Activated CD4-positive, alpha-beta T cell treated with anti-CD3 and anti-CD28 coated beads for 36 hours (primary cell): ENCODE measurements at regions of chr1 and their contacts with region 1.

Region 1: DNA sequence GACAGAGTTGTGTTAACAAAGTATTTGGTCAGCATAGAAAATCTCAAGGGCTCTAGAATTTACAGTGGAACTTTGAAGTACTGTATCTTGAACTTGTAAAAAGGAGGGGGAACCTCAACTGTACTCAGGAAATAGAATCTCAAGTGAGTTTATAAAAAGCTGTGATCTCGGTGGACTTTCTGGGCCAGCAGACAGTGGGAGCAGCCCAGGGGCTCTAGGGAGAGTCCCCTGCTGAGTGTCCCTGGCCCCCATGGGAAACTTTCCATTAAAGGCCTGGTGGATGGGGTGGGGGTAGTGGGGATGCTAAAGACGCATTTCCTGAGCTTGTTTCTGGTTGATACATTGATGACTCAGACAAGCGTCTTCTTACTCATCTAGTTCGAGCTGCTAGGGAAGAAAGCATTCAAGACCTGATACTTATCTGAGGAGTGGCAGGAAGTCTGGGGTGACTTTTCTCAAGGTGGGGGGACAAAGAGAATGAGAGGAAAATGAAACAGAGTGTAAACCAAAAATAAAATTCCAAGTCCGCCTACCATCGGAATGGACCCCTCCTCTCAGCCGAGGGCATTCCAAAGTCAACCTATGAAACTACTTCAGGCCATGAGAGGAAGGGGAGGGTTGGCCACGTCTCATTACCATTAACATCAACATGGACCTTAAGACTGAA is 65.5 kb downstream of the NID1 start:
- DNase-seq: peak; percentile 76
- ATAC-seq: peak; percentile 85
- H3K4me3 Mint-ChIP-seq: peak overlapping the region; percentile 32
- H3K27ac Mint-ChIP-seq: peak overlapping the region; percentile 94
- H3K4me1 Mint-ChIP-seq: peaks cover 58% of the 10 kb centered on the region
- H3K27me3 Mint-ChIP-seq: no peaks in the 10 kb centered on the region

Region 2: DNA sequence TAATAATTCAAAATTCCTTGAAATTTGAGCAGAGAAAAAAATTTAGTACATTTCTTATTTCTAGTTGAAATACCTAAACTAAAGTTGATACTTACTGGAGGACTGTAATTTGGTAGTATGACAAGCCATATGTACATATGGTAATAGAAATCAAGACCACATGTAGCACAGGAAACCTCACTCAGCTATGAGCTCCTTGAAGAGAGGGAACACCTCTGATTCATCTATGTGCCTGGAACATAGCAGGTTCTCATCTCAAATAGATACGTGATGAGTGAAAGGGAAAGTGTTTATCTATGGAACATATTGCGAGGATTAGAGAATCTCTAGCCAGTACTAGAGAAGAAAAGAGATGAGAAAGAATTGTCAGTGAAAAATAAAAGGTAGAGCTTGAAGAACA is 301.9 kb before region 1 on chr1:
- CTCF ChIA-PET with region 1: no interaction called
- POLR2A ChIA-PET with region 1: no interaction called
- intact Hi-C with region 1: loop called in 1 of 2 experiments (anchors 2 kb)
- DNase-seq: no peak
- ATAC-seq: peak; percentile 100
- H3K4me3 Mint-ChIP-seq: no peak overlapping the region
- H3K27ac Mint-ChIP-seq: peak overlapping the region; percentile 85
- H3K4me1 Mint-ChIP-seq: peaks cover 17% of the 10 kb centered on the region
- H3K27me3 Mint-ChIP-seq: no peaks in the 10 kb centered on the region

Region 3: DNA sequence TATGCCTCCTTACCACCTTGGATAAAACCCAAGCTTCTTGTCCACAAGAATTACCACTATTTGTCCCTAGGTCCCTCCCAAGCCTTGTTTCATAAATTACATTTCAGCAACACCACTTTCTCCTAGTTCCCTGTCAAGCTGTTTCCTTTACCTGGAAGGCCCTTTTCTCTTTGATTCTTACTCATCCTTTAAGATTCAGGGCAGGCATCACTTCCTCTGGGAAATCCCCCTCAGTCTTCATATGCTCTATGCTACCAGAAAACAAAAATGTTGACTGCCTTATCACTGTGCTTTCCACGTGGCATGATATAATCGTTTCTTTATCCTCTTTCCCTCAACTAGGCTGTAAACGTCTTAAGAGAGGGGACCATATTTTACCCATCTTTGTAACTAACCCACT is 235.4 kb before region 1 on chr1:
- CTCF ChIA-PET with region 1: no interaction called
- POLR2A ChIA-PET with region 1: no interaction called
- intact Hi-C with region 1: loop called in 1 of 2 experiments (anchors 1 kb)
- DNase-seq: peak; percentile 38
- ATAC-seq: peak; percentile 94
- H3K4me3 Mint-ChIP-seq: no peak overlapping the region
- H3K27ac Mint-ChIP-seq: no peak overlapping the region
- H3K4me1 Mint-ChIP-seq: peaks cover 11% of the 10 kb centered on the region
- H3K27me3 Mint-ChIP-seq: no peaks in the 10 kb centered on the region

Region 4: DNA sequence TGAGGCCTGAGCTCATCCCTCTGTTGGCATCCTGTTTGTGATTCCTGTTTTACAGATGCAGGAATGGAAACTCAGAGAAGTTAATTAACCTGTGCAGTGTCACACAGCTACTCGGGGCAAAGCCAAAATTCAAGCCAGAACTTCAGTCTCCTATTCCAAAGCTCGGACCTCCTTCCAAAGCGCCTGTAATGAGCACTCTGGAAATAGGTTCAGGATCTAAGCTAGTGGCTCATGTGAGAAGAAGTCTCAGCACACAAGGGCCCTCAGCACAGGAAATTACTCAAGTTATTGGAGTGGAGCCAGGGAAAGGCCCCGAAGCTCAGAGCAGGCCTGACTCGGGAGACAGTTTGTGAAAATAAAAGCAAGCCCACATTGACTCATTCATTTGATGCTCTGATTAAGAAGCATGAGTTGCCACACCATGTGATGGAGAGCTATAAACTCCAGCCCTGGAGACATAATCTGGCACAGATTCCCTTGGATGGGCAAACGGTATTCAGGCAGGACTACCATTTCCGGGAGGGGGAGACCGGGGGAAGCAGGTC is 82.1 kb before region 1 on chr1:
- CTCF ChIA-PET with region 1: no interaction called
- POLR2A ChIA-PET with region 1: no interaction called
- intact Hi-C with region 1: loop called in 1 of 2 experiments (anchors 1 kb)
- DNase-seq: peak; percentile 84
- ATAC-seq: peak; percentile 97
- H3K4me3 Mint-ChIP-seq: peak overlapping the region; percentile 2
- H3K27ac Mint-ChIP-seq: peak overlapping the region; percentile 75
- H3K4me1 Mint-ChIP-seq: peaks cover 34% of the 10 kb centered on the region
- H3K27me3 Mint-ChIP-seq: no peaks in the 10 kb centered on the region

Region 5: GRCh38 chr1:235954306-235955283 is 44.8 kb before region 1 on chr1:
- CTCF ChIA-PET with region 1: no interaction called
- POLR2A ChIA-PET with region 1: interaction called, 4 read pairs
- intact Hi-C with region 1: loop called in 1 of 2 experiments (anchors 1 kb)
- DNase-seq: peak; percentile 62
- ATAC-seq: peak; percentile 46
- H3K4me3 Mint-ChIP-seq: no peak overlapping the region
- H3K27ac Mint-ChIP-seq: no peak overlapping the region
- H3K4me1 Mint-ChIP-seq: peaks cover 34% of the 10 kb centered on the region
- H3K27me3 Mint-ChIP-seq: no peaks in the 10 kb centered on the region

Region 6: DNA sequence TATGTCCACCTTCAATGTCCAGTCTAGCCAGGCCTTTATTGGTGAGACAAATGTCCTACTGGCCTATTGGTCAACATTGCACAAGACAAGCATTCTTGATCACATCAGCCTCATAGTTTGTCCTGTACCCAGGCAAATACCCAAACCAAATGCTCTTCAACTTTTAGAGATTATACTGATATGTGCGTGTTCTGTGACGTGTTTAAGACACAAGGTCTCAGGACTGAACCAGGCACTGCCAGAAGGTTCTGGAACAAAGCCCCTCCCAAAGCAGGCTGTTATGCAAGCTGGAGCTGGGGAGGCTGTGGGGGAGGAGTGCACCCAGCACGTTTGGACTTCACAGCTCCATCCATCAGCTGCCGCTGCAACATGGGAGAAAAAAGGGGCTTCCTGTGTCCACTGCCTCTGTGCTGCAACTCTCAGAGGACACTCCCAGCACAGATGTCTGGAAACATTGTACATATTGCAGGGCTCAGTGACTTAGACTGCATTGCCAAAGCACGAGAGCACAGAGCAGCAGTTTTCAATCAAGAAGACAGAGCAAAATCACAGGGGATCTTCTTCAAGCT is 19.6 kb after region 1 on chr1:
- CTCF ChIA-PET with region 1: no interaction called
- POLR2A ChIA-PET with region 1: no interaction called
- intact Hi-C with region 1: no loop called
- DNase-seq: no peak
- ATAC-seq: no peak
- H3K4me3 Mint-ChIP-seq: no peak overlapping the region
- H3K27ac Mint-ChIP-seq: no peak overlapping the region
- H3K4me1 Mint-ChIP-seq: no peaks in the 10 kb centered on the region
- H3K27me3 Mint-ChIP-seq: no peaks in the 10 kb centered on the region